ENCODE measurements at regions of chr19 and their contacts with region 1.

Region 1: DNA sequence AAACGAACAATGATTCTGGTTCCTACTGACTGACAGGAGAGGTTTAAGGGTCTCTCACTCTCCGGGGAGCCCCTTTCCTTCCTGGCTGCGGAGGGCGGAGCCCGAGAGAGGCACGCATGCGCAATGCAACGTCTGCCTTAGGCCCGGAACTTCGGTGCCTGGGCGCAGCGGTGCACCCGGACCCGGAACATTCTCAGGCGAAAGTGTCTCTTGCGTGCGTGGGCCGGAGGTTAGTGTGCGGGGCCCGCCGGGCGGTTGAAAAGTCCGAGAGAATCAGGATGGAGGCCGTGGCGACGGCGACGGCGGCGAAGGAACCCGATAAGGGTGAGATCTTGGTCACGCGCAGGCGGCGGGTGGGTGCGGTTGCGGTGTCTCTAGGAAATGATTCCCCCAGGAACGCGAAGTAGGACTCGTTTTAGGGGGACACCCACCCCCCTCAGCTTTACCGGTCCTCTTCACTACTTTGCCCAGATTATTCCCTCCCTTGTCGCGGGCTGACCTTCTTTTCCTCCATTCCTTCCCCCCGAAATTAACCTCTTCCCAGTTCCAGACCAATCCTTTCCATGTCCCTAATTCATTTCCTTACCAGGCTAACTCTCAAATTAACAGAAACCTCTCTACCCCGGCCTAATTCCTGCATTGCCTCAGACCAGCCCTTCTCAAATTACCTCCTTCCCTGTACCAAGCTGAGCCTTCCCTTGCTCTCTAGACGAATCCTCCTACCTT is at the start of gene CCDC97:
- DNase-seq: peak; percentile 92
- ATAC-seq: peak; percentile 66
- H3K4me3 Mint-ChIP-seq: peak within 1 kb of the TSS; percentile 91
- H3K27ac Mint-ChIP-seq: peak within 1 kb of the TSS; percentile 97
- H3K4me1 Mint-ChIP-seq: peaks cover 63% of the 10 kb centered on the region
- H3K27me3 Mint-ChIP-seq: no peaks in the 10 kb centered on the region
- total RNA-seq, gene CCDC97: 21.2 to 21.4 TPM

Region 2: DNA sequence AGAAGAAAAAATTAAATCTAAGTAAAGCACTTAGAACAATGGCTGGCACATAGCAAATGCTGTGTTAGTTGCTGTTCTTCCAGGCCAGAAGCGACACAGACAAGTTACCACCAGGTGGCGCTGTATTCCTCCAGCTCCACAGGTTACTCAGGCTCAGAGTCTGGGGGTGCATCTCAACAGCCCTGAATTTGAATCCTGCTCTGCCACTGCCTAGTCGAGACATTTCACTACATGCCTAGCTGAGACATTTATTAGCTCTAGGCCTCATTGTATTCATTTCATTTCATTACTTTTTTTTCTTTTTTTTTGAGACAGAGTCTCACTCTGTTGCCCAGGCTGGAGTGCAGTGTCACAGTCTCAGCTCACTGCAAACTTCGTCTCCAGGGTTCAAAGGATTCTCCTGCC is 335.6 kb before region 1 on chr19:
- CTCF ChIA-PET with region 1: interaction called, 3 read pairs
- POLR2A ChIA-PET with region 1: no interaction called
- intact Hi-C with region 1: loop called in 1 of 2 experiments (anchors 2 kb)
- DNase-seq: peak; percentile 88
- ATAC-seq: peak; percentile 68
- H3K4me3 Mint-ChIP-seq: no peak overlapping the region
- H3K27ac Mint-ChIP-seq: no peak overlapping the region
- H3K4me1 Mint-ChIP-seq: peaks cover 20% of the 10 kb centered on the region
- H3K27me3 Mint-ChIP-seq: peaks cover 9% of the 10 kb centered on the region

Region 3: DNA sequence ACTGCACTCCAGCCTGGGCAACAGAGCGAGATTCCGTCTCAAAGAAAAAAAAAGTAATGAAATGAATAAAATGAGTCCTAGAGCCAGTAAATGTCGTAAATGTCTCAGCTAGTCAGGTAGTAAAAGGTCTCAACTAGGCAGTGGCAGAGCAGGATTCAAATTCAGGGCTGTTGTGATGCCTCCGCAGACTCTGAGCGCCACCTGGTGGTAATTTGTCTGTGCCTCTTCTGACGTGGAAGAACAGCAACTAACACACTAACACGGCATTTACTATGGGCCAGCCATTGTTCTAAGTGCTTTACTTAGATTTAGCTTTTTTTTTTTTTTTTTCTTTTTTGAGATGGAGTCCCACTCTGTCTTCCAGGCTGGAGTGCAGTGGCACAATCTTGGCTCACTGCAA is 165.8 kb before region 1 on chr19:
- CTCF ChIA-PET with region 1: interaction called, 3 read pairs
- POLR2A ChIA-PET with region 1: no interaction called
- intact Hi-C with region 1: loop called in 1 of 2 experiments (anchors 1 kb)
- DNase-seq: peak; percentile 94
- ATAC-seq: peak; percentile 92
- H3K4me3 Mint-ChIP-seq: no peak overlapping the region
- H3K27ac Mint-ChIP-seq: no peak overlapping the region
- H3K4me1 Mint-ChIP-seq: no peaks in the 10 kb centered on the region
- H3K27me3 Mint-ChIP-seq: peaks cover 7% of the 10 kb centered on the region

Region 4: GRCh38 chr19:41226053-41226873 is 83.9 kb before region 1 on chr19:
- CTCF ChIA-PET with region 1: interaction called, 6 read pairs
- POLR2A ChIA-PET with region 1: interaction called, 5 read pairs
- intact Hi-C with region 1: loop called in 1 of 2 experiments (anchors 1 kb)
- DNase-seq: peak; percentile 70
- ATAC-seq: peak; percentile 45
- H3K4me3 Mint-ChIP-seq: peak overlapping the region; percentile 74
- H3K27ac Mint-ChIP-seq: peak overlapping the region; percentile 91
- H3K4me1 Mint-ChIP-seq: peaks cover 24% of the 10 kb centered on the region
- H3K27me3 Mint-ChIP-seq: peaks cover 6% of the 10 kb centered on the region

Region 5: GRCh38 chr19:41327576-41328156 is 17.5 kb after region 1 on chr19:
- CTCF ChIA-PET with region 1: interaction called, 9 read pairs
- POLR2A ChIA-PET with region 1: no interaction called
- intact Hi-C with region 1: loop called (anchors 1 kb)
- DNase-seq: peak; percentile 93
- ATAC-seq: peak; percentile 75
- H3K4me3 Mint-ChIP-seq: peak overlapping the region; percentile 63
- H3K27ac Mint-ChIP-seq: peak overlapping the region; percentile 96
- H3K4me1 Mint-ChIP-seq: peaks cover 55% of the 10 kb centered on the region
- H3K27me3 Mint-ChIP-seq: no peaks in the 10 kb centered on the region

Region 6: DNA sequence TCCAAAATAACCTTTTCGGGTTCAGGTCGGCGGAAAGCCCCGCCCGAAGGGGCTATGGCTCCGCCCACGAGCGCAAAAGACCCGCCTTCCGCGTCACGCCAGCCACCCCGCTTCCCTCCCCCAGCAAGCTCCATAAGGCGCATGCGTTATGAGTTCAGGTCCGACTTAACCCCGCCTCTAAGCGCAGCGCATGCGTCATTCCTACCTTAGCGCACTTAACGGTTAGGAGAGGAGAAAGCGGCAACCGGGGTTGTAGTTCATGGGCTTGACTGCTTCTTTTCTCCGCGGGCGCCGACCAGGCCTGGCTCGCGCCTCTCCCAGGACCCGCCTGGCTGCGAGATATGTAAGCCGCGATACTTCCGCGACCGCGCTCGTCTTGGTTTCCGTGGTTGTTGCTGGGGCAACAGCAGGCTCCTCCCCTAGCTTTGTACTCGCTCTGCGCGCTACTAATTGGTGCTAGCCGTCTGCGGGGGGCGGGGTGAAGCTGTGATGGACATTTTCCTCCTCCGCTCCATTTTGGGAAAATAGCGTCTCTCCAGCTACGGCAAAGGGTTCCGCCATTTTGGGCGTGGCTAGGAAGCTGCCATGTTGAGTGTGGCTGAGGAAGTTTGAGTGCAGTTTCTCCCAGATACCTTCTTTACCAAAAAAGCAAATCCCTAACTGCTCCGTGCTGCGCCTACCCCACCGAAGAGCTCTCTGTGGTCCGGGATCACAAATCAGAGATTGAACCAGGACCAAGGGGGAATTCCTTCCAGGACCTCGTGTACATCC is 53.7 kb after region 1 on chr19 and contains the start of gene B9D2:
- CTCF ChIA-PET with region 1: interaction called, 7 read pairs
- POLR2A ChIA-PET with region 1: no interaction called
- intact Hi-C with region 1: loop called in 1 of 2 experiments (anchors 1 kb)
- DNase-seq: peak; percentile 99
- ATAC-seq: peak; percentile 95
- H3K4me3 Mint-ChIP-seq: peak within 1 kb of the TSS; percentile 92
- H3K27ac Mint-ChIP-seq: peak within 1 kb of the TSS; percentile 98
- H3K4me1 Mint-ChIP-seq: peaks cover 29% of the 10 kb centered on the region
- H3K27me3 Mint-ChIP-seq: no peaks in the 10 kb centered on the region
- total RNA-seq, gene B9D2: 4.0 to 5.2 TPM

Region 7: GRCh38 chr19:41439441-41440222 is 129.4 kb after region 1 on chr19 and contains the start of gene DMAC2:
- CTCF ChIA-PET with region 1: interaction called, 7 read pairs
- POLR2A ChIA-PET with region 1: no interaction called
- intact Hi-C with region 1: loop called in 1 of 2 experiments (anchors 5 kb)
- DNase-seq: peak; percentile 98
- ATAC-seq: peak; percentile 97
- H3K4me3 Mint-ChIP-seq: no peak within 1 kb of the TSS
- H3K27ac Mint-ChIP-seq: peak within 1 kb of the TSS; percentile 2
- H3K4me1 Mint-ChIP-seq: peaks cover 18% of the 10 kb centered on the region
- H3K27me3 Mint-ChIP-seq: peaks cover 2% of the 10 kb centered on the region
- total RNA-seq, gene DMAC2: 52.5 to 66.3 TPM

Measured in activated CD4-positive, alpha-beta T cell treated with anti-CD3 and anti-CD28 coated beads for 36 hours (primary cell).